ENCODE measurements at regions of chr3 and their contacts with region 1.

Region 1: GRCh38 chr3:126083913-126084767 is at the start of gene SLC41A3:
- DNase-seq: peak; percentile 94
- ATAC-seq: peak; percentile 99
- total RNA-seq, gene SLC41A3: 34.7 TPM

Region 2: DNA sequence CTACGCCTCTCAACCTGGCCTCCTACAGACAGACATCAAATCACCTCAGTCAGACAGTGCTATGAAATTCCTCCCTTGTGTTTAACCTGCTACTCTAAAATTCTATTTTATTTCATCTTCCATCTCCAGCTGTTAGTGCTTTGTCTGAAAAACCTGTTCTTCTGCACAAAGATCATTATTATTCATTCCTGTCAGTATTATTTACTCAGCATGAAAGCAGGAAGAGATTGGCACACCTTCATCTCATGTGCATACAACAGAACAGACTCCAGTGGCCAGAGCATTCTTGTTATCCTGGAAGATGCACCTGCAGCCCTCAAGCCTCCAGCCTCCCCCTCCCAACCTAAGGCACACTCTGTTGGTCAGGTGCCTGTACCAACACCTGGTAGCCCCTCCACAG is 117.0 kb before region 1 on chr3:
- intact Hi-C with region 1: loop called (anchors 10 kb)
- DNase-seq: no peak
- ATAC-seq: no peak

Region 3: DNA sequence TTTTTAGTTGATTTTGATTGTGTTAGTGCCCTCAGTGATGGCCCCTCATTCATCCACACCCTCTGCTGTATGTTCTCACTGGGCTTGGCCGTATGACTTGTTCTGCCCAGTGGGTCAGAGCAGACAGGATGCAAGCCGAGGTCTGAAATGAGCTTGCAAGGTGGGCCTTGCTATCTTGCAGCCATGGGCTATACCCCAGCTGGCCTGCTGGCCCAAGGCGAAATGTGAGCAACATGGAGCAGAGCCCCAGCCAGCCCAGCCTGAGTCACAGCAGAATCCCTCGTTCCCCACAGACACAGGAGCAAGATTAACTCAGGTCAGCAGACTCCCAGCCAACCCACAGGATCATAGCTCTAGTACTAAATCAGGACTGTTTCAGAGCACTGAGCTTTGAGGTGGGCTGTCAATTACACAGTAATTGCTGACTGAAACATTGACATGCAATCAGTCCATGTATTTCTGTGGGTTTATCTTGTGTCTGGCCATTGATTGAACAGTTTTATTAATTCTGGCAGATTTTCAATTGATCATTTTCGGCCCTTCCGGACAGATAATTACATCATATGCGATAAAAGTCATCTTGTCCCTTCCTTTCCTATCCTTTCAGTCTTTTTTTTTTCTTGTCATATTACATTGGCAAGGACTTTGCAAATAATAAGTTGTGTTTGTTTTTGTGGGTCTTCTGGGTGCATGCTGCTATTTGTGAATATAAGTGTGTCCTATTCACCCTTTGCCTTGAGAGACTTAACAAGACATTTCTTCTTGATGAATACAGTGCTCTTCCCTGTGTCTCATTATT is 246.0 kb after region 1 on chr3:
- intact Hi-C with region 1: no loop called
- DNase-seq: no peak
- ATAC-seq: no peak

Region 4: GRCh38 chr3:126654571-126655383 is 570.6 kb after region 1 on chr3 and contains the start of gene TXNRD3:
- intact Hi-C with region 1: no loop called
- DNase-seq: peak; percentile 90
- ATAC-seq: peak; percentile 98
- total RNA-seq, gene TXNRD3: 5.4 TPM